Activated B cell treated with CpG ODN at 0.5 μM for 24 hours (primary cell): ENCODE measurements at regions of chr3 and their contacts with region 1.

Region 1: GRCh38 chr3:186241910-186242821 is 119.9 kb downstream of the DGKG start:
- DNase-seq: no peak
- ATAC-seq: peak; percentile 91
- H3K4me3 Mint-ChIP-seq: no peak overlapping the region
- H3K27ac Mint-ChIP-seq: no peak overlapping the region
- H3K4me1 Mint-ChIP-seq: peaks cover 15% of the 10 kb centered on the region
- H3K27me3 Mint-ChIP-seq: no peaks in the 10 kb centered on the region
- CTCF ChIP-seq: no peak

Region 2: GRCh38 chr3:185942907-185943759 is 299.0 kb before region 1 on chr3:
- CTCF ChIA-PET with region 1: interaction called, 6 read pairs
- POLR2A ChIA-PET with region 1: no interaction called
- intact Hi-C with region 1: loop called (anchors 1 kb)
- DNase-seq: peak; percentile 78
- ATAC-seq: peak; percentile 99
- H3K4me3 Mint-ChIP-seq: peak overlapping the region; percentile 58
- H3K27ac Mint-ChIP-seq: peak overlapping the region; percentile 61
- H3K4me1 Mint-ChIP-seq: peaks cover 16% of the 10 kb centered on the region
- H3K27me3 Mint-ChIP-seq: peaks cover 7% of the 10 kb centered on the region
- CTCF ChIP-seq: peak; percentile 99

Region 3: GRCh38 chr3:185983495-185984141 is 258.5 kb before region 1 on chr3:
- CTCF ChIA-PET with region 1: interaction called, 11 read pairs
- POLR2A ChIA-PET with region 1: no interaction called
- intact Hi-C with region 1: loop called (anchors 1 kb)
- DNase-seq: peak; percentile 37
- ATAC-seq: peak; percentile 82
- H3K4me3 Mint-ChIP-seq: no peak overlapping the region
- H3K27ac Mint-ChIP-seq: peak overlapping the region; percentile 30
- H3K4me1 Mint-ChIP-seq: peaks cover 4% of the 10 kb centered on the region
- H3K27me3 Mint-ChIP-seq: peaks cover 14% of the 10 kb centered on the region
- CTCF ChIP-seq: peak; percentile 91

Region 4: DNA sequence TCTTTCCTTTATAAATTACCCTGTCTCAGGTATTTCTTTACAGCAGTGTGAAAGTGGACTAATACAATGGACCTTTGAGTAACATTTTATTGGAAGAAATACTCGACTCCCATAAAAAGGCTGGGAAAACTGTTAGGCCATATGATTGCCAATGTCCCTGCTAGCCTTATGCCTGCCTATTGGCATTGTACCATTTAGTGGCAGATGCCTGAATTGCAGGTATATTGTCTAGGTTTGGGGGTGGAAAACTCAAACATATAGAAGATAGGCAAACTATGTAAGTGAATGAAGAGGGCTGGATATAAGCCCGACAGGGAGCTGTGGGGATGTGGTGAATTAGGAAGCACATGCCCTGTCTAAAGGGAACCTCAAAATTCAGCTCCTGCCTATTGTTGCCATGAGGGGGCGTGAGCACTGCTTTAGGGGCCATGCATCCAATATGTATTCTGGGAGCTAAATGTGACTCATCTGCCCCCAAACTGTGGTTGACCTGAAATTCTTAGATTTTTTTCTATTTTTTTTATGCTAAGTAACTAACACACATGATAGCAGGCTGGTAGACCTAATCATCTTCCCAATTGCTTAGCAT is 239.2 kb before region 1 on chr3:
- CTCF ChIA-PET with region 1: no interaction called
- POLR2A ChIA-PET with region 1: no interaction called
- intact Hi-C with region 1: loop called (anchors 5 kb)
- DNase-seq: no peak
- ATAC-seq: peak; percentile 34
- H3K4me3 Mint-ChIP-seq: no peak overlapping the region
- H3K27ac Mint-ChIP-seq: no peak overlapping the region
- H3K4me1 Mint-ChIP-seq: no peaks in the 10 kb centered on the region
- H3K27me3 Mint-ChIP-seq: peaks cover 20% of the 10 kb centered on the region
- CTCF ChIP-seq: no peak

Region 5: GRCh38 chr3:186044973-186045372 is 197.2 kb before region 1 on chr3:
- CTCF ChIA-PET with region 1: no interaction called
- POLR2A ChIA-PET with region 1: no interaction called
- intact Hi-C with region 1: no loop called
- DNase-seq: no peak
- ATAC-seq: no peak
- H3K4me3 Mint-ChIP-seq: no peak overlapping the region
- H3K27ac Mint-ChIP-seq: no peak overlapping the region
- H3K4me1 Mint-ChIP-seq: no peaks in the 10 kb centered on the region
- H3K27me3 Mint-ChIP-seq: peaks cover 7% of the 10 kb centered on the region
- CTCF ChIP-seq: no peak

Region 6: GRCh38 chr3:186093271-186093900 is 148.8 kb before region 1 on chr3:
- CTCF ChIA-PET with region 1: no interaction called
- POLR2A ChIA-PET with region 1: no interaction called
- intact Hi-C with region 1: loop called (anchors 5 kb)
- DNase-seq: no peak
- ATAC-seq: no peak
- H3K4me3 Mint-ChIP-seq: no peak overlapping the region
- H3K27ac Mint-ChIP-seq: no peak overlapping the region
- H3K4me1 Mint-ChIP-seq: peaks cover 4% of the 10 kb centered on the region
- H3K27me3 Mint-ChIP-seq: peaks cover 16% of the 10 kb centered on the region
- CTCF ChIP-seq: no peak

Region 7: DNA sequence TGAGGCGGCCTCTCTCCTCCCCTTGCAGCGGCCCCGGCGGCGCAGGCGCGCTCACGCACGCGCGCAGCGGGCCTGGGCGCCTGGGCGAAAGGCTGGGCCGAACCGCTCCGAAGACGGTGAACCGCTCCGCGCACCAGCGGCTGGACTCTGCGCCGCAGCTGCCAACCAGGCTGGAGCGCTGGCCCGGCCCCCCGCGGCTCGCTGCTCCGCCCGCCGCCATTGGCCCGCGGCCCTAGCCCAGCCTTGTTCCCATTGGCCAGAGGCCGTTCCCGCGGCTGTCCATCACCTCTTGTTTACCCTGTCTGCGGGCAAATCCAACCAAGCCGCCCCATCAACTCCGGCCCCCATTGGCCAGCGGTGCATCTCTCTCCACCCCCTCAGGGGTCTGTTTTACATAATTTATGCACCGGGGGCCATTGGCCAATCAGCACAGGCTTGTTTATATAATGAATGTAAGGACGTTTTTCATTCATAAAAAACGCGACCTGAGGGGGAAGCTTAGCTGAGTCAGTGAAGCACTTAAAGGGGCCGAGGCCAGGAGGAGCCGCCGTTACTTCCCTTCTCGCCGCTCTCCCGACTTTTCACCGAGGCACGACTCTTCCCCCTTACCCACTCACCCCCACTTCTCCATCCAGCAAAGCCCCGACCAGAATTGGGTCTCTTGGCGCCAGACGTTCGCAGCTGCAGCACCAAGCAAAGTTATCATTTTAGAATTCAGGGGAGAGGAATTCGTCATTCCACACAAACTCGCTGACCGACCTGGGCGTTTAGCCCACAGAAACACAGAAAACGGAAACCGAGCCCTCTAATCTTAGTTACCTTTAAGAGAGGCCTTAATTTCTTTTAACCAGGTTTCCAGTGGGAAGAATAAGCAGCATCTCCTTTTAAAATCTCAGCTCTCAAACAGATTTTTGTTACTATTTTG is 133.0 kb before region 1 on chr3 and contains the start of gene ETV5:
- CTCF ChIA-PET with region 1: no interaction called
- POLR2A ChIA-PET with region 1: no interaction called
- intact Hi-C with region 1: loop called (anchors 5 kb)
- DNase-seq: peak; percentile 85
- ATAC-seq: peak; percentile 95
- H3K4me3 Mint-ChIP-seq: peak within 1 kb of the TSS; percentile 95
- H3K27ac Mint-ChIP-seq: peak within 1 kb of the TSS; percentile 80
- H3K4me1 Mint-ChIP-seq: peaks cover 35% of the 10 kb centered on the region
- H3K27me3 Mint-ChIP-seq: peaks cover 42% of the 10 kb centered on the region
- CTCF ChIP-seq: no peak
- total RNA-seq, gene ETV5: 0.49 and 0.89 TPM in 2 replicates

Region 8: DNA sequence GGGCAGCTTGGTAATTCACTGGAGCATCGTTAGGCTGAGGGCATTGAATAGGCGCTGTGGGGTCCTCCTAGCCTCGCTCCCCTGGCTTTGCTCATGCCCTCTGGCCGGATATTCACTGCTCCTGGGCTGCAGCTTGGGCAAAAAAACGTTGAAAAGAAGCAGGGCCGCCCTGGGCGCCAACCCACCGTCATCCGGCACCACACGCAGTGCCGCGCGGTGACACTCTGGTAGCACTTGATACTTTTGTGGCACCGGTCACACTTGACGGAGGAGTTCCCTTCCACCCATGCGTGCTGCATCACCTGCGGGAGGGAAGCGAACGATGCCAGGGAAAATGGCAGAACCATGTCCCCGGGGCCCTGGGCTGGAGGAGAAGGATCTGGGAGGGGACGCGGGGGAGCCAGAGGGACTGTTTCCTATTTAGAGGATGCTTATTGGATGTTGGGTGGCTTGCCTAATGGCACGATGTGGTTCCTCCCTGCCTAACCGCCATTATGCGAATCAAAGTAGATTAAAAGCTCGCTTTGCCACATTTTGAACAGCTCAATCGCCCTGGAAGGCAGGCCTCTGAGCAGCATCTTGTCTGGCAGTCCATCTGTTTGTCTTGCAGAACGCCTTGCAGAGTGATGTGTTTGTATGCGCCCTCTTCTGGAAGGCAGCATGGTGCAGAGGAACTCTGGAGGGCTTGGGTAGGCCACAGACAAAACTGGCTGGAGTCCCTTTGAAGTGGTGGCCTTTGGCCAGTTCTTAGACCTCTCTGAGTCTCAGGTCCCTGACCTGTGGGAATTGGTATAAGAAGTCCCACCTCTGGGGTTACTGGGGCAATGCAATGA is 26.7 kb after region 1 on chr3:
- CTCF ChIA-PET with region 1: no interaction called
- POLR2A ChIA-PET with region 1: no interaction called
- intact Hi-C with region 1: no loop called
- DNase-seq: no peak
- ATAC-seq: no peak
- H3K4me3 Mint-ChIP-seq: no peak overlapping the region
- H3K27ac Mint-ChIP-seq: no peak overlapping the region
- H3K4me1 Mint-ChIP-seq: no peaks in the 10 kb centered on the region
- H3K27me3 Mint-ChIP-seq: no peaks in the 10 kb centered on the region
- CTCF ChIP-seq: no peak

Region 9: DNA sequence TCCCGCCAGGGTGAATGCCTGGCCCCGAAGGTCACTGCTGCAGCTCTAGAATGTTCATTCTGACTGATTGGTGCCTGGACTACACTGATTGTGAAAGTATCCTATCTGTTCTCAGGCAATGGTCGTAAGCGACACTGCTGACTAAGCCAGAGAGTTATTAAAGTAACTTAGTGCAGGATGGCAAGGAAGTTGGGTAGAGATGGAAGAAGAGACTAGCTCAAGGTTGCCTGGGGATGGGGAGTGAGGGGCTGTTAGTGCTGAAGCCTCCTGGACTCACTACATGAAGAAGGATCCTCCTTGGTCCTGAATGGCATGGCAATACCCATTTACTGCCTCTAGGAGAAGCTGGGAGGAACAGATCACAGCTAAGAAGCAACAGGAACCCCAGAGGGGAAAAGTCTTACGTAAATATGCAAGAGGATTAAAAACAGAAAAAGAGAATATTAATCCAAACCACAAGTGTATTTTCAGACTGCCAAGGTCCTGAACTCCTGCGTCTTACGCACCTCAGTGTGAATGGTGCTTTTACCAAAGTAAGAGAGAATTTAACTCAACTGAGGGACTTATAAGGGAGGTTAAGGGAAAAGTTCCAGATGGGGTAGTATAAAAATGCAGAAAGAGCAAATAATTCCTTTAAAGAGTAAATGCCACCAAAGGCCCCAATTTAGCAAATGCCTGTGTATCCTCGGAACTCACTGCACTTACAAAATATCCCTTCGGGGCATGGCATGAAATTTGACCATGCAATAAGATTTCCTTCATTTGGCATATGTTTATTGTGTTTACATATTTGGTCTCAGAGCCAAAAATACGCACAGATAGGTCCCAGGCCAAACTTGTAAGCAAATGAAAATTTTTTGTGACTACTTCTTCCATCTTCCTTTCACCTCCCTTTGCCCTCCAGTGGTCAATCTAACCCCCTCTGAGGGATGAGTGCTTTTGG is 183.9 kb after region 1 on chr3:
- CTCF ChIA-PET with region 1: no interaction called
- POLR2A ChIA-PET with region 1: no interaction called
- intact Hi-C with region 1: no loop called
- DNase-seq: no peak
- ATAC-seq: peak; percentile 42
- H3K4me3 Mint-ChIP-seq: no peak overlapping the region
- H3K27ac Mint-ChIP-seq: no peak overlapping the region
- H3K4me1 Mint-ChIP-seq: peaks cover 22% of the 10 kb centered on the region
- H3K27me3 Mint-ChIP-seq: no peaks in the 10 kb centered on the region
- CTCF ChIP-seq: no peak

Region 10: GRCh38 chr3:186540221-186540834 is 298.2 kb after region 1 on chr3:
- CTCF ChIA-PET with region 1: interaction called, 12 read pairs
- POLR2A ChIA-PET with region 1: no interaction called
- intact Hi-C with region 1: loop called (anchors 1 kb)
- DNase-seq: peak; percentile 55
- ATAC-seq: peak; percentile 88
- H3K4me3 Mint-ChIP-seq: no peak overlapping the region
- H3K27ac Mint-ChIP-seq: no peak overlapping the region
- H3K4me1 Mint-ChIP-seq: peaks cover 35% of the 10 kb centered on the region
- H3K27me3 Mint-ChIP-seq: no peaks in the 10 kb centered on the region
- CTCF ChIP-seq: no peak